Breast epithelium (tissue), 4 donors: ENCODE measurements at regions of chr11 and their contacts with region 1.

Region 1: DNA sequence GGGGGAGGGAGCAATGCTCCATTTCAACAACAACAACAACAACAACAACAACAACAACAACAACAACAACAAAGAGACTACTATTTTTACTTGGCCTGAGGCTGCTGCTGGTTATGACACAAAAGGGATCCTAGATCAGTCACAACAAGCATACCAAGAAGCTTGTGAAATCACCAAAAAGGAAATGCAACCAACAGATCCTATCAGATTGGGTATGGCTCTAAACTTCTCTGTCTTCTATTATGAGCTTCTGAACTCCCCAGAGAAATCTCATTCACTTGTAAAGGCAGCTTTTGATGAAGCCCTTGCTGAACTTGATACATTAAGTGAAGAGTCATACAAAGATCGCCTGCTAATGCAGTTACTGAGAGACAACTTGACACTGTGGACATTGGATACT is 10.5 kb upstream of the MS4A2 start:
- DNase-seq: no peak
- H3K4me3 ChIP-seq: no peak overlapping the region
- H3K27ac ChIP-seq: no peak overlapping the region
- H3K4me1 ChIP-seq: no peaks in the 10 kb centered on the region
- H3K27me3 ChIP-seq: no peaks in the 10 kb centered on the region
- CTCF ChIP-seq: no peak
- POLR2A ChIP-seq: no peak

Region 2: DNA sequence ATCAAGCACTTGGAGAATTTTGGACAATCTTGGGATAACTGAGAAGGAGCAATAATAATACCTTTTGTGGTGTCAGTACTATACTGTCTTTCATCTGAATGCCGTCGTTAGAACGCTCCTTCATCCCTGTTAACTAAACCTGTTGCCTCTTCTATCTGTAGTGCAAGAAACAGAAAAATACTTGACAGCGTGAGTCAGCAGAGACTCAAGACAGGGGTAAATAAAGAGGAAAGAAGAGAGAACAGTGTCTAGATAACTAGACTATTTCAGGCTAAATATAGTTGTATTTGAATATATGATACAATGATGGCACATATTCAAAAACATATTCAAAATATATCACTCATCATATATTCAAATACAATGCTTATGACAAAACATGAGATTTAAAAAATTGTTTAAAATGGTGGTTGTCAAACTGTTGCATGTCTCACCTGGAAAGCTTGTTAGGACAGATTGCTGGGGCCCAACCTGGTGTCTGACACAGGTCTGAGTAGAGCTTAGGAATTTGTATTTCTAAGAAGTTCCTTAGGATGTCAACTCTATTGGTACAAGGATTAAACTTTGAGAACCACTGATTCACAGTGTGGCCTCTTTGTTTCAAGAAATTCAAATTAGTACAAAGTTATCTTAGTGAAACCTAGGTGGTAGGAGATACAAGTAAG is 96.7 kb before region 1 on chr11:
- intact Hi-C with region 1: loop called (anchors 5 kb)
- DNase-seq: no peak
- H3K4me3 ChIP-seq: no peak overlapping the region
- H3K27ac ChIP-seq: no peak overlapping the region
- H3K4me1 ChIP-seq: no peaks in the 10 kb centered on the region
- H3K27me3 ChIP-seq: no peaks in the 10 kb centered on the region
- CTCF ChIP-seq: no peak
- POLR2A ChIP-seq: no peak

Region 3: DNA sequence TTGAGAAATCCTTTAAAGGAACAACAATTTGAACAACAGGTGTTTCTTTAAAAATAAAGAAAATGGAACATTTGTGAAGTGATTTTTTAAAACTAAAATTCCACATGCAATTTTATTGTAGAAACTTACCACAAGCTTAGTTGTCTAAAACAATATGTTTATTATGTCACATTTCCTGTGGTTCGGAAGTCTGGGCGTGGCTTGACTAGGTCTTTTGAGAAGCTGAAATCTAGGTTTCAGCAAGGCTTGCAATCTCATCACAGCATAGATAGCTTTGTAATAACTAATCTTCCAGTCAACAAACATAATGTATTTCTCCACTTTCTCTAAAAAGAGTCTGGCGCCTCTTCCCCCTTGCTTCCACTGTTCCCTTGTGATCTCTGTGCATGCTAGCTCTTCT is 78.0 kb after region 1 on chr11:
- intact Hi-C with region 1: no loop called
- DNase-seq: no peak
- H3K4me3 ChIP-seq: no peak overlapping the region
- H3K27ac ChIP-seq: no peak overlapping the region
- H3K4me1 ChIP-seq: no peaks in the 10 kb centered on the region
- H3K27me3 ChIP-seq: no peaks in the 10 kb centered on the region
- CTCF ChIP-seq: no peak
- POLR2A ChIP-seq: no peak